Psoas muscle (tissue), 8 donors: ENCODE measurements at regions of chr20 and their contacts with region 1.

Region 1: DNA sequence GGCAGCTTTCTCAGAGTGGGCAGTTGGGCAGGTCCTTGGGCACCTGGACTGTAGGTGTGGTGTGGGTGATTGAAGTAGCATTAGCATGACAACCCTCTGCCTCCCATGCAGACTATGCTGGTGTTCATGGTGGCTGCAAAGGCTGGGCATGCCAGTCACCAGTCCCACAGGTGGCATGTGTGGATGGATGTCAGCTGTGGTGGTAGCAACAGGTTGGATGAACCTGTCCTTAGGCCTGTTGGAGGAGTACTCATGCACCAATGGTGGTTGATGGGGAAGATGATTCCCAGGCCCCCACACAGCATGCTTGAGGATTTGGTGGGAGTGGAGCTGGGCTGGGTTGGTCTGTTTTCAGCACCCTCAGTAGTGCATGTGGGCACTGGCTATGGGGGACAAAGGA is 251.1 kb downstream of the PAX1 start:
- DNase-seq: no peak
- ATAC-seq: no peak
- H3K4me3 ChIP-seq: no peak overlapping the region
- H3K27ac ChIP-seq: no peak overlapping the region
- H3K4me1 ChIP-seq: no peaks in the 10 kb centered on the region
- H3K27me3 ChIP-seq: no peaks in the 10 kb centered on the region
- CTCF ChIP-seq: no peak

Region 2: GRCh38 chr20:21968486-21968885 is 11.9 kb after region 1 on chr20:
- intact Hi-C with region 1: no loop called
- DNase-seq: no peak
- ATAC-seq: no peak
- H3K4me3 ChIP-seq: no peak overlapping the region
- H3K27ac ChIP-seq: no peak overlapping the region
- H3K4me1 ChIP-seq: no peaks in the 10 kb centered on the region
- H3K27me3 ChIP-seq: no peaks in the 10 kb centered on the region
- CTCF ChIP-seq: no peak

Region 3: DNA sequence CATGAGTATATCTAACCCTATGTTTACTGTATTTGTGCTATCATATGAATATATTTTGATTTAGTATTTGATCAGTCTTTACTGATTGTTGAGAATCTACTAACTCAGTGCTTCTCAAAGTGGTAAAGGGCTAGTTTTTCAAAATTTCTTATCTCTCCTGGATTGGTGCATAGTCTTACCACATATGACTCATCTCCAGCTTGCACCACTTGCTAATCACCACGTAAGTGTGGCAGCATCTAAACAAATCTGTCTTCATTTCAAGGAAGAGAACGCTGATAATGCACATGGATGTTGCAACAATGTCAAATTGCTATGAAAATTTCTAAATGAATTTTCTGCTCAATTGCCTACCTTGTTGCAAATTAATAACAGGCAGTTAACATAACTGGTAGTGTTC is 48.4 kb after region 1 on chr20:
- intact Hi-C with region 1: loop called in 1 of 2 experiments (anchors 5 kb)
- DNase-seq: no peak
- ATAC-seq: no peak
- H3K4me3 ChIP-seq: no peak overlapping the region
- H3K27ac ChIP-seq: no peak overlapping the region
- H3K4me1 ChIP-seq: no peaks in the 10 kb centered on the region
- H3K27me3 ChIP-seq: no peaks in the 10 kb centered on the region
- CTCF ChIP-seq: no peak